ENCODE measurements at regions of chr19 and their contacts with region 1.

Region 1: DNA sequence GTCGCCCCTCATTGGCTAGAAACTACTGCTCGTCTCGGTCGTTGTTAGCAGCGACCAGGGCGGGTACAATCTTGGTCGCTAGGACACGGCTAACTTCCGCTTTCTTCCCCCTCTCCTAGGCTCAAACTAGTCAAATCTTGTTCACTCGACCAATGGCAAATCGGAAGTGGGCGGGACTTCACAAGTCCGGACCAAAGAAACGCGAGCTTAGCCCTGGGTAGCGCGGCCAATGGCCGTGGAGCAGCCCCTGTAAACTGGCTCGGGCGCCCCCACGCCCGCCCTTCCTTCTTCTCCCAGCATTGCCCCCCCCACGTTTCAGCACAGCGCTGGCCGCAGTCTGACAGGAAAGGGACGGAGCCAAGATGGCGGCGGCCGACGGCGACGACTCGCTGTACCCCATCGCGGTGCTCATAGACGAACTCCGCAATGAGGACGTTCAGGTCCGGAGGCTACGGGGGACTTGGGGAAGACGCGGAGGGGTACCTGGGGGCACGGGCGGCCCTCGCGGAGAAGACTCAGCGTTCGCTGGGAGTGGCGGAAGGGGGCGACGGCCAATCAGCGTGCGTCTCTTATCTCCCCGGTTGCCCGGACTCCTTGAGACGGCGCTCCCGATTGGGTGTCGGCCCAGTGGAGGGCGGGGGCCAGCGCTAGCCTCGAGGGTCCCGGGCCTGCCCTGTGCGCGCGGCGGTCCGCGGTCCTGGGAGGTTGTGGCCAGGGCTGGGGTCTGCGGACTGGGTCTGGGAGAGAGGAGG is at the start of gene PPP2R1A:
- DNase-seq: peak; percentile 93 to 100 (median 99)
- ATAC-seq: peak; percentile 84 to 88
- H3K4me3 Mint-ChIP-seq: peak within 1 kb of the TSS; percentile 95 to 99 (median 98)
- H3K27ac Mint-ChIP-seq: peak within 1 kb of the TSS; percentile 99 to 100 (median 99)
- H3K4me1 Mint-ChIP-seq: peaks cover 28 to 54% (median 50%) of the 10 kb centered on the region in 4 donors
- H3K27me3 Mint-ChIP-seq: no peaks in the 10 kb centered on the region
- polyA plus RNA-seq, gene PPP2R1A: 148 to 174 (median 170) TPM

Region 2: DNA sequence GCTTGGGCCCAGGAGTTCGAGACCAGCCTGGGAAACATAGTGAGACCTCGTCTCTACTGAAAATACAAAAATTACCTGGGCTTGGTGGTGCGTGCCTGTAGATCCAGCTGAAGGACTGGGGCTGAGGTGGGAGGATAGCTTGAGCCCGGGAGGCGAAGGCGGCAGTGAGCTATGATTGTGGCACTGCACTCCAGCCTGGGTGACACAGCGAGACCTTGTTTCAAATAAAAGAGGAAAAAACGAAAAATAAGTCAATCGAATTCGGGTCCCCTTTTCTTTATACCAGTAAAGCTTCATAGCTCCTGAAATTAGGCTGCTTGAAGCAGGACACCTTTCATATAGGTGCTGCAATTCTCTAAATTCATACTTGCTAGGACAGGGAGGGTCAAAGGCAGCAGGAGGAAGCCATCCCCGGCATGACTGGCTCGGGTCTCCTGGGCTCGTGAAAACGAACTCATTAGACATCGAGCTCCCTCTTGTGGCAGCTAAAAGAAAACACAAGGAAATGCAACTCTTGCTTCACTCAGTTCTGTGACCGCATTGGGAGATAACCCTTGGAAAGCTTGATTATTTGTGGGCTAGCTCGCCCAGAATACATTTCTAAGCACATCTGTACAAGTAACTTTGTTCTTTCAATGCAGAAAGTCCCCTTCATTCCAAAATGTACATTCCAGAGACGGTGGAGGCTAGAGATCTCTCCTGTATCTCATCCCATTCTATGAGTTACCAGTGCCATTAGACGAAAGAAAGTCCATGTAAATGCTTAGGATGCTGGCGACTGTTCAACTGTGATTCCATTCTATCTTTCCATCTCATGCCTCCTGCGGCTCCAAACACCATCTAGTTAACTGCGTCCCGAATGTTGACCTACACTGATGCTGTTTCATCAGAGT is 412.1 kb before region 1 on chr19:
- POLR2A ChIA-PET with region 1: interaction called, 11 read pairs
- DNase-seq: peak in 7 of 10 donors; percentile 26 to 67 (median 34)
- ATAC-seq: peak; percentile 63 to 69
- H3K4me3 Mint-ChIP-seq: no peak overlapping the region
- H3K27ac Mint-ChIP-seq: no peak overlapping the region
- H3K4me1 Mint-ChIP-seq: peaks cover 0 to 5% (median 1%) of the 10 kb centered on the region in 4 donors
- H3K27me3 Mint-ChIP-seq: peaks cover 41 to 63% (median 55%) of the 10 kb centered on the region in 5 donors

Region 3: GRCh38 chr19:52048555-52049501 is 141.1 kb before region 1 on chr19 and contains the start of gene ZNF432:
- POLR2A ChIA-PET with region 1: interaction called, 15 read pairs
- DNase-seq: peak; percentile 66 to 95 (median 80)
- ATAC-seq: peak; percentile 86 to 87
- H3K4me3 Mint-ChIP-seq: peak within 1 kb of the TSS; percentile 94 to 100 (median 99)
- H3K27ac Mint-ChIP-seq: peak within 1 kb of the TSS; percentile 97 to 100 (median 100)
- H3K4me1 Mint-ChIP-seq: peaks cover 5 to 33% (median 25%) of the 10 kb centered on the region in 4 donors
- H3K27me3 Mint-ChIP-seq: no peaks in the 10 kb centered on the region
- polyA plus RNA-seq, gene ZNF432: 2.7 to 4.2 (median 3.2) TPM

Region 4: DNA sequence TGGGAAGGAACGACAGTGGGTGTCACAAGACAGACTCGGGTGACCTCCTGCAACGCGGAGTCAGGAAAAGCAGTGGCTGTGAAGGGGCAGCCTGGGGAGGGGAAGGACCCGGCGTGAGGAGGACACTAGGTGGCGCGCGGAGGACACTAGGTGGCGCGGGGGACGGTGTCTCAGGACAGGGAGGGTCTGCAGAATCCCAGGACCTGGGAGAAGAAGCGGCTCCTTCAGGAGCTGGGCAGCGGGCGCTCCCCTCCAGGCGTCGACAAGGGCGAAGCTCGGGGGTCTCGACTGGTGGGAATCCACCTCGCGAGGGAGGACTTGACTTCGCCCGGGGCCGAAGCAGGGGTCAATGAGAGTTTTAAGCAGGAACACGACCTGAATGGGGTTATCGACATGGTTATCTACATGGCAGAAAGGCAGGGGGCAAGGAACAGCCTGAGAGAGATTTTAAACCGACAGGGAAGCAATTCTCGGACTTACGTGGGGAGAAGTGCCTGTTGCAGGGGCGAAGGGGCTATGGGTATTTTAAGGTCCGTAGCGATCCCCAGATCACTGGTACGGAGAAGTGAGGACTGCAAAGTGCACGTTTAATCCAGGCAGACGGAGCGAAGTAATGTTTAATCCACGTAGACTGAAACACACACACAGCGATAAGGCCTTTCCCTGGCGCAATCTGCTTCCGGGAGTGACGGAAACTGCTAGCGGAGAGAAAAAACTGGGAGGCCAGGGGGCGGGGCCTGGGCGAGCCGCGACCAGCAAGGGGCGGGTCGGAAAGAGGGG is 50.5 kb before region 1 on chr19 and contains the start of gene ZNF616:
- POLR2A ChIA-PET with region 1: interaction called, 26 read pairs
- DNase-seq: peak; percentile 69 to 98 (median 96)
- ATAC-seq: peak; percentile 67 to 80
- H3K4me3 Mint-ChIP-seq: peak within 1 kb of the TSS; percentile 88 to 99 (median 96)
- H3K27ac Mint-ChIP-seq: peak within 1 kb of the TSS; percentile 90 to 99 (median 96)
- H3K4me1 Mint-ChIP-seq: peaks cover 24 to 42% (median 38%) of the 10 kb centered on the region in 4 donors
- H3K27me3 Mint-ChIP-seq: no peaks in the 10 kb centered on the region
- polyA plus RNA-seq, gene ZNF616: 2.3 to 6.7 (median 4.9) TPM

Region 5: DNA sequence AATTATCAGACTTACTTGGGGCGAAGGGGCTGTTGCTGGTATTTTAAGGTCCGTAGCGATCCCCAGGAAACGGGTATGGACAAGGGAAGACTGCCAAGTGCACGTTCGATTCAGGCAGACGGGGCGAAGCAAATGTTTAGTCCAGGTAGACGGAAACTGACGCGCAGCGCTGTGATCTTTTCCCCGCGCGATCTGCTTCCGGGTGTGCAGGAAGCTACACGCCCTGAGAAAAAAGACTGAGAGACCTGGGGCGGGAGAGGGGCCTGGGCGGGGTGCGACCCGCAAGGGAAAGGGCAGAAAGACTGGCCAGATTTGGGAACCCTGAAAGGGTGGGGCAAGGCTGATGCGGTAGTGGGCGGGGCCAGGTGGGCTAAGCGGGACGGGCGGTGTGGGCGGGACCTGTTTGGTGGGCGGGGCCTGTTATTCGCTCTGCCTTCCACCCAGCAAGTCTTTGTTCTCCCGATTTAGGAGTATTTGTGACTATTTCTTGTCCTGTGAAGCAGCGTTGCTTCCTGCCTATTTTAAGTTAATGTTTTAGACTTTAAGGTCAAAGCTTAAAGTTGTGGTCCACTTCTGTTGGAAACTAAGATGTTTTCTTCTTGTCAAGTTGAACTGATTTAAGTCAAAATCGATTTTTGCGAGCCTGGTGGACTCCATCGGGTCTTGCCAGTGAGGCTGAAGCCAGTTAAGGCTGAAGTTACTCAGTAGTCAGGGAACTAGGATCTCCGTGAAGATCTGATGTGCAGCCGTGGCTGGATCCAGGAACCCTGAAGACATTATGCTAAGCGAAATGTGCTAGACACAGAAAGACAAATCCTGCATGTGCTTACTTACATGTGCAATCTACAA is 18.4 kb before region 1 on chr19 and contains the start of gene ZNF836:
- POLR2A ChIA-PET with region 1: interaction called, 56 read pairs
- DNase-seq: peak; percentile 82 to 97 (median 93)
- ATAC-seq: peak; percentile 94
- H3K4me3 Mint-ChIP-seq: peak within 1 kb of the TSS; percentile 87 to 99 (median 96)
- H3K27ac Mint-ChIP-seq: peak within 1 kb of the TSS; percentile 93 to 100 (median 98)
- H3K4me1 Mint-ChIP-seq: peaks cover 13 to 54% (median 36%) of the 10 kb centered on the region in 4 donors
- H3K27me3 Mint-ChIP-seq: no peaks in the 10 kb centered on the region
- polyA plus RNA-seq, gene ZNF836: 10.2 to 19.8 (median 12.8) TPM

Region 6: DNA sequence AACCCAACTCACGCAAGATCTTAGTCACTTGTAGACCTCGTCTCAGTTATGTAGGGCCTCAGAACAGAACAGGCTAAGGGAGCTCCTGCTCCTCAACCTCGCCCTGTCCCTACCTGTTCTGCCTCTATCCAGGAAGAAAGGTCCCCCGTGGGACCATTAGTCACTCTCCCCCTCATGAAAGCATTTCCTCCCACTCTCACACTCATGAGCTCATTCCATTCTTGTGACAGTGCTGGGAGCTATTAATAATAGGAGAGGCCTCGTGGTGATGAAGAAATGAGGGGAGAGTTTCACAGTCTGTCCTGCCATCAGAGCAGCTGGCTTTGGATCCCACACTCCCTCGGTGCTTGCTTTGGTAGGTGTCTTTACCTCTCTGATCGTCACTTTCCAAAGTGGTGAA is 10.1 kb after region 1 on chr19:
- POLR2A ChIA-PET with region 1: interaction called, 16 read pairs
- DNase-seq: no peak
- ATAC-seq: no peak
- H3K4me3 Mint-ChIP-seq: no peak overlapping the region
- H3K27ac Mint-ChIP-seq: peak overlapping the region in 3 of 10 donors; percentile 4 to 23 (median 12)
- H3K4me1 Mint-ChIP-seq: peaks cover 37 to 83% (median 69%) of the 10 kb centered on the region in 4 donors
- H3K27me3 Mint-ChIP-seq: no peaks in the 10 kb centered on the region

Region 7: GRCh38 chr19:52658595-52659375 is 468.9 kb after region 1 on chr19:
- POLR2A ChIA-PET with region 1: interaction called, 10 read pairs
- DNase-seq: no peak
- ATAC-seq: no peak
- H3K4me3 Mint-ChIP-seq: no peak overlapping the region
- H3K27ac Mint-ChIP-seq: peak overlapping the region in 1 of 10 donors; percentile 57
- H3K4me1 Mint-ChIP-seq: peaks cover 0 to 2% (median 0%) of the 10 kb centered on the region in 4 donors
- H3K27me3 Mint-ChIP-seq: no peaks in the 10 kb centered on the region

Measured in naive thymus-derived CD8-positive, alpha-beta T cell (primary cell).